ENCODE measurements at regions of chr15 and their contacts with region 1.

Region 1: GRCh38 chr15:79853458-79854328 is 43.1 kb downstream of the MTHFS start:
- DNase-seq: peak; percentile 84
- ATAC-seq: peak; percentile 98
- H3K4me3 Mint-ChIP-seq: no peak overlapping the region
- H3K27ac Mint-ChIP-seq: no peak overlapping the region
- H3K4me1 Mint-ChIP-seq: peaks cover 17% of the 10 kb centered on the region
- H3K27me3 Mint-ChIP-seq: no peaks in the 10 kb centered on the region

Region 2: DNA sequence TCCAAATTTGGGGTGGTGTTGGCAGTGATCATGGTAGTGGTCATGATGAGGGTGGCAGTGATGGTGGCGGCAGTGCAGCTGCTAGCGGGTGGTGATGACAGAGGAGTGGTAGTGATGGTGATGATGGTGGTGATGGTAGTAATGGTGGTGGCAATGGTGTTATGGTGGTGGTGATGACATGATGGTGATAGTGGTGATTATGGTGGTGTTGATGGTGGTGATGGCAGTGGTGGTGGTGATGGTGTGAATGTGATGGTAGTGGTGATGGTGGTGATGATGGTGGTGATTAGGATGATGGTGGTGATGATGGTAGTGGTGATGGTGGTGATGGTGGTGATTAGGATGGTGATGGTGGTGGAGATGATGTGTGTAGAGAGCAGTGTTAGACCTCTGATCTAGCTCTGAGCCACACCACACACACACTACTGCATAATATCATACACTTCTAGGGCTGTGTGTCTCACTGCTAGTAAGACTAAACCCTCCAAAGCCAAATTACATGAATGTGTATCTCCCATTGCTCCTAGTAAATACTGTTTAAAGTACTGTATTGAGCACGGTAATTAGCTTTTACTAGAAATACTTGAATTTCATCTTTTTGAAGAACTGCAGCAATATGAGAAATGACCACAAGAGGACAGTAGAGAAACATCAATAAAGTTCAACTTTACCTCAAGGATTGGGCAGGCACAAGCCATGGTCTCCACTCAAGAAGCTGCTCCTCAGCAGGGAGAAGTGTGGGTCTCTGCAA is 514.0 kb before region 1 on chr15:
- CTCF ChIA-PET with region 1: interaction called, 6 read pairs
- POLR2A ChIA-PET with region 1: no interaction called
- intact Hi-C with region 1: loop called in 1 of 2 experiments (anchors 2 kb)
- DNase-seq: peak; percentile 14
- ATAC-seq: no peak
- H3K4me3 Mint-ChIP-seq: no peak overlapping the region
- H3K27ac Mint-ChIP-seq: no peak overlapping the region
- H3K4me1 Mint-ChIP-seq: no peaks in the 10 kb centered on the region
- H3K27me3 Mint-ChIP-seq: no peaks in the 10 kb centered on the region

Region 3: GRCh38 chr15:79596051-79596507 is 257.6 kb before region 1 on chr15:
- CTCF ChIA-PET with region 1: interaction called, 13 read pairs
- POLR2A ChIA-PET with region 1: no interaction called
- intact Hi-C with region 1: no loop called
- DNase-seq: peak; percentile 80
- ATAC-seq: peak; percentile 100
- H3K4me3 Mint-ChIP-seq: no peak overlapping the region
- H3K27ac Mint-ChIP-seq: no peak overlapping the region
- H3K4me1 Mint-ChIP-seq: no peaks in the 10 kb centered on the region
- H3K27me3 Mint-ChIP-seq: peaks cover 25% of the 10 kb centered on the region

Region 4: DNA sequence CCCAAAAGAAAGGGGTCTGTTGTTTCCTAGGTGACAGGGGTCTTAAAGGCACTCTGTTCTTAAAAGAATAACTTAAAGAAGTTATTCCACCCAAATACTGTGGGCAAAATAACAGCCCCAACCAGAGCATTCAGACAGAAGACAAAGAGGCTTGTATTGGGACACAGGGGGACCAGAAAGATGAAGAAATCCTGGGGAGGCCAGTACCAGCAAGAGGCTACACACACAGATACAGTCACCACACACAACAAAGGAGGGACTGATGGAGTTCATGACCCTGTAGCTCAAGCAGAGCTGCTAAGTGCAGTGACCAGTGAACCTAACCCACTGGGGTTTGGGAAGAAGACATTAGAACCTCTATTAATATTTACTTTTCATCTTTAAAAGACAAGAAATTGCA is 15.8 kb before region 1 on chr15:
- CTCF ChIA-PET with region 1: interaction called, 11 read pairs
- POLR2A ChIA-PET with region 1: interaction called, 4 read pairs
- intact Hi-C with region 1: no loop called
- DNase-seq: no peak
- ATAC-seq: no peak
- H3K4me3 Mint-ChIP-seq: no peak overlapping the region
- H3K27ac Mint-ChIP-seq: no peak overlapping the region
- H3K4me1 Mint-ChIP-seq: peaks cover under 1% of the 10 kb centered on the region
- H3K27me3 Mint-ChIP-seq: no peaks in the 10 kb centered on the region

Region 5: DNA sequence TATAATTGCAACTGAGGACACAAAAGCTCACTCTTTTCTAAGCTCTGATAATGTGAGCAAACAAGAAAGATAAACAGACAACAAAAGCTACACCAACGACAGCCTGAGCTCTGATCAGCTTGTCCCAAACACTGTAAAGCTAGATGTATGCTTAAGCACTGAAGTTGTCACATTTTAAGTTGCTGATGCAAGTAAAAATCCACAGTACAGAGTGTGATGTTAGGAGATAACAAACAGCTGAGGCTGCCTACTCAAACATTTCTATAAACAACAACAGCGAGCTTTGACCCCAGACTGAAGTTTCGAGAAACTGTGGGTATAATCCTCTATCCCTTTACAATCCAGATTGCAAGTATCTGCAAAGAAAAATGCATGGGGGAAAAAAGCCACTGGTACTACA is 32.4 kb after region 1 on chr15:
- CTCF ChIA-PET with region 1: interaction called, 15 read pairs
- POLR2A ChIA-PET with region 1: no interaction called
- intact Hi-C with region 1: no loop called
- DNase-seq: no peak
- ATAC-seq: no peak
- H3K4me3 Mint-ChIP-seq: no peak overlapping the region
- H3K27ac Mint-ChIP-seq: no peak overlapping the region
- H3K4me1 Mint-ChIP-seq: peaks cover 44% of the 10 kb centered on the region
- H3K27me3 Mint-ChIP-seq: no peaks in the 10 kb centered on the region

Region 6: GRCh38 chr15:79989682-79990081 is 136.0 kb after region 1 on chr15:
- CTCF ChIA-PET with region 1: interaction called, 36 read pairs
- POLR2A ChIA-PET with region 1: no interaction called
- intact Hi-C with region 1: loop called (anchors 1 to 2 kb)
- DNase-seq: no peak
- ATAC-seq: no peak
- H3K4me3 Mint-ChIP-seq: no peak overlapping the region
- H3K27ac Mint-ChIP-seq: no peak overlapping the region
- H3K4me1 Mint-ChIP-seq: peaks cover 4% of the 10 kb centered on the region
- H3K27me3 Mint-ChIP-seq: no peaks in the 10 kb centered on the region